ENCODE measurements at regions of chrX and their contacts with region 1.

Region 1: DNA sequence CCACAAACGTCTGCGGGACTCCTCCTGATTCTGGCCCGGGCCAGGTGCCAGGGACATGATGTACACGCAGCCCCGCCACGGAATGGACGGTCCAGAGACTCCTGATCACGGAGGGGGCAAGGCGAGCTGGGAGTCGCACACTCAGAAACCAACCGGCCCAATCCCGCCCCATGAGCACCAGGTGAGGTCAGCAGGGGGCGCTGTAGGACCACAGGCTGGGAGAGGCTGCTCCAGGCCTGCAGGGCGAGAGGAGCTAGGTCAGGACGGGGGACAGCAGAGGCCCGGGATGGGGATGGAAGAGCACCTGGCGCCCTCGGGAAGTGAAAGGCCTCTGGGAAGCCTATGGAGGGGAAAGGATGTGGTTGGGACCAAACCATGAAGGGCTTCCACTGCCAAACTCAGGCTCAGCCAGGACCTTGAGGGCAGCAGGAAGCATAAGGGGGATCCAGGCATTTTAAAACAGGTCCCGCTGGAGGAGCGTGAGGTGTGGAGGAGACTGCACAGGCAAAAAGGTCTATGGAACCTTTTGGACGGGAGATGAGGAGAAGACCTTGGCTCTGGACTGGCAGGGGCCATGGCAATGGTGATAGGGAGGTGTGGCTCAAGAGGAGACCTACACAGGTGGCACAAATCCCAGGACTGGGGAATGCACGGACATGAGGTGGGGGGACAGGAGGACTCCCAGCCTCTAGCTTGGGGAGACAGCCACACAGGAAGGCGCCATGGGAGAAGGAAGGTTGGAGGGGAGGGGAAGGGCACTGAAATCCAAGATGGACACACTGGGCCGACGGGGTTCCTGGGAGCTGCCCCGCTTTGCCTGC is 79.2 kb downstream of the MTMR1 start:
- DNase-seq: peak; percentile 55
- H3K4me3 ChIP-seq: no peak overlapping the region
- H3K27ac ChIP-seq: no peak overlapping the region
- H3K4me1 ChIP-seq: no peaks in the 10 kb centered on the region
- CTCF ChIP-seq: peak; percentile 75

Region 2: GRCh38 chrX:151082076-151082948 is 310.0 kb after region 1 on chrX:
- CTCF ChIA-PET with region 1: interaction called, 10 read pairs
- POLR2A ChIA-PET with region 1: no interaction called
- intact Hi-C with region 1: loop called (anchors 1 kb)
- DNase-seq: peak; percentile 43
- H3K4me3 ChIP-seq: no peak overlapping the region
- H3K27ac ChIP-seq: no peak overlapping the region
- H3K4me1 ChIP-seq: no peaks in the 10 kb centered on the region
- CTCF ChIP-seq: peak; percentile 74

Measured in OCI-LY7 (cell line).